Naive thymus-derived CD4-positive, alpha-beta T cell (primary cell): ENCODE measurements at regions of chr5 and their contacts with region 1.

Region 1: DNA sequence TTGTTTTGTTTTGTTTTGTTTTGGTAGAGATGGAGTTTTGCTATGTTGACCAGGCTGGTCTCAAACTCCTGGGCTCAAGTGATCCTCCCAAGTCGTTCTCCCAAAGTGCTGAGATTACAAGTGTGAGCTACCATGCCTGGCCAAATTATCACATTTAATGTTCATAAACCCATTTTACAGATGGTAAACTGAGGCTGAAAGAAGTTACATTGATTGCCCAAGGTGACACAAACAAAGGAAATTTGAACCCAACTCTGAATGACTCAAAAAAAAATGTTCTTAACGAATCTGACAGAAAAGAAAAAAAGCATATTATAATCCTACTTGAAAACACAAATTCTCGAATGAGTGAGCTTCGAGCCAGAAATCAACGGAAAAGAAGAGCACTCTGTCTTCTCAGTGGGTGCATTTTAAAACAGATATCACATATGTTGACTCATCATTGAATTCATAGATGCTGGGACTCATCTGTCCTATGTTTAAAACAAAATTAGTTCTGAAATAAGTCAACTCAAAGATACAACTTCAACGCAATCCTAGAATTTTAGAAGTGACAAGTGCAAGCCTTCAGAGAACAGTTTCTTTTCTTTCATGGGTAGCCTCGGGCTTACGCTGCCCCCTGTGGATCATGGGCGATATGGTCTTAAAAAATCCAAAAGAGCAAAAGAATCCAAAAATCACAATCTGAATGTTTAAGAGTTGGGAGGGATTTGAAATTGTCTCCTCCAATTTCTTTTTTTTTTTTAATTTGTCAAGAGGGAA is 28.4 kb downstream of the TIMD4 start:
- DNase-seq: peak in 8 of 9 donors; percentile 37 to 68 (median 62)
- ATAC-seq: peak; percentile 81
- H3K4me3 ChIP-seq: peak overlapping the region; percentile 25
- H3K4me3 Mint-ChIP-seq: peak overlapping the region in 7 of 10 donors; percentile 17 to 63 (median 54)
- H3K27ac ChIP-seq: no peak overlapping the region
- H3K27ac Mint-ChIP-seq: peak overlapping the region; percentile 36 to 97 (median 60)
- H3K4me1 ChIP-seq: peaks cover 9 to 16% of the 10 kb centered on the region in 2 donors
- H3K4me1 Mint-ChIP-seq: peaks cover 8 to 80% (median 49%) of the 10 kb centered on the region in 7 donors
- H3K27me3 ChIP-seq: no peaks in the 10 kb centered on the region
- H3K27me3 Mint-ChIP-seq: no peaks in the 10 kb centered on the region

Region 2: GRCh38 chr5:154940772-154941620 is 1993.6 kb before region 1 on chr5 and contains the start of gene MRPL22:
- CTCF ChIA-PET with region 1: no interaction called
- POLR2A ChIA-PET with region 1: no interaction called
- intact Hi-C with region 1: loop called (anchors 10 kb)
- DNase-seq: peak; percentile 85 to 99 (median 94)
- ATAC-seq: peak; percentile 84
- H3K4me3 ChIP-seq: peak within 1 kb of the TSS; percentile 76
- H3K4me3 Mint-ChIP-seq: peak within 1 kb of the TSS; percentile 89 to 100 (median 96)
- H3K27ac ChIP-seq: peak within 1 kb of the TSS; percentile 94
- H3K27ac Mint-ChIP-seq: peak within 1 kb of the TSS; percentile 93 to 98 (median 96)
- H3K4me1 ChIP-seq: peaks cover 22 to 25% of the 10 kb centered on the region in 2 donors
- H3K4me1 Mint-ChIP-seq: peaks cover 23 to 62% (median 47%) of the 10 kb centered on the region in 7 donors
- H3K27me3 ChIP-seq: no peaks in the 10 kb centered on the region
- H3K27me3 Mint-ChIP-seq: no peaks in the 10 kb centered on the region
- total RNA-seq, gene MRPL22: 18.4 to 62.0 (median 24.9) TPM

Region 3: GRCh38 chr5:155943516-155944407 is 990.9 kb before region 1 on chr5:
- CTCF ChIA-PET with region 1: interaction called, 3 read pairs
- POLR2A ChIA-PET with region 1: no interaction called
- intact Hi-C with region 1: loop called (anchors 1 to 2 kb)
- DNase-seq: peak in 8 of 9 donors; percentile 1 to 31 (median 22)
- ATAC-seq: peak; percentile 62
- H3K4me3 ChIP-seq: no peak overlapping the region
- H3K4me3 Mint-ChIP-seq: no peak overlapping the region
- H3K27ac ChIP-seq: no peak overlapping the region
- H3K27ac Mint-ChIP-seq: peak overlapping the region in 1 of 9 donors; percentile 32
- H3K4me1 ChIP-seq: no peaks in the 10 kb centered on the region
- H3K4me1 Mint-ChIP-seq: peaks cover 0 to 6% (median 0%) of the 10 kb centered on the region in 7 donors
- H3K27me3 ChIP-seq: no peaks in the 10 kb centered on the region
- H3K27me3 Mint-ChIP-seq: peaks cover 11 to 25% (median 19%) of the 10 kb centered on the region in 5 donors

Region 4: GRCh38 chr5:156667616-156668015 is 267.0 kb before region 1 on chr5:
- CTCF ChIA-PET with region 1: no interaction called
- POLR2A ChIA-PET with region 1: no interaction called
- intact Hi-C with region 1: loop called in 1 of 2 experiments (anchors 5 kb)
- DNase-seq: no peak
- ATAC-seq: no peak
- H3K4me3 ChIP-seq: no peak overlapping the region
- H3K4me3 Mint-ChIP-seq: no peak overlapping the region
- H3K27ac ChIP-seq: no peak overlapping the region
- H3K27ac Mint-ChIP-seq: no peak overlapping the region
- H3K4me1 ChIP-seq: no peaks in the 10 kb centered on the region
- H3K4me1 Mint-ChIP-seq: no peaks in the 10 kb centered on the region
- H3K27me3 ChIP-seq: no peaks in the 10 kb centered on the region
- H3K27me3 Mint-ChIP-seq: peaks cover 0 to 8% (median 6%) of the 10 kb centered on the region in 5 donors

Region 5: DNA sequence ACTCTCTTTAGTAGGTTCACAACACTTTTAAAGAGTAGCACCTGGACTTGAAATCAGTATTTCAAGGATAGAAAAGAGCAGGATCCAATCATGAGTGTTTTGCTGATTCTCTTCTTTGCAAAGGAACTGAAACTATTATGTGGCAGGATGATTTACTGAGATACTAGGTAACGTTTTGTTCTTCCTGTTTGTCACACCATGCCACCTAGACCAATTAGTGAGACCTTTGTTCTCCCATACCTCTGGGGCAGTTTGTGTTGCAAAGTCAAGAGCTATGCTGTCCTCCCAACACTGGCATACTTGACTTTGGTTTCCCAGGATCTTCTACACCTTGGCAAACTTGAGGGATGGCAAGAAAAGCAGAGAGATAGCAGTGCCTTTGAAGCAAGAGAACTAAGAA is 41.1 kb before region 1 on chr5:
- CTCF ChIA-PET with region 1: interaction called, 13 read pairs
- POLR2A ChIA-PET with region 1: no interaction called
- intact Hi-C with region 1: loop called (anchors 1 kb)
- DNase-seq: no peak
- ATAC-seq: no peak
- H3K4me3 ChIP-seq: no peak overlapping the region
- H3K4me3 Mint-ChIP-seq: peak overlapping the region in 5 of 10 donors; percentile 12 to 58 (median 19)
- H3K27ac ChIP-seq: no peak overlapping the region
- H3K27ac Mint-ChIP-seq: peak overlapping the region in 6 of 9 donors; percentile 2 to 93 (median 58)
- H3K4me1 ChIP-seq: peaks cover 0 to 15% of the 10 kb centered on the region in 2 donors
- H3K4me1 Mint-ChIP-seq: peaks cover 21 to 52% (median 32%) of the 10 kb centered on the region in 7 donors
- H3K27me3 ChIP-seq: no peaks in the 10 kb centered on the region
- H3K27me3 Mint-ChIP-seq: no peaks in the 10 kb centered on the region

Region 6: GRCh38 chr5:156981481-156981880 is 46.9 kb after region 1 on chr5:
- CTCF ChIA-PET with region 1: no interaction called
- POLR2A ChIA-PET with region 1: no interaction called
- intact Hi-C with region 1: no loop called
- DNase-seq: no peak
- ATAC-seq: no peak
- H3K4me3 ChIP-seq: no peak overlapping the region
- H3K4me3 Mint-ChIP-seq: no peak overlapping the region
- H3K27ac ChIP-seq: no peak overlapping the region
- H3K27ac Mint-ChIP-seq: no peak overlapping the region
- H3K4me1 ChIP-seq: no peaks in the 10 kb centered on the region
- H3K4me1 Mint-ChIP-seq: peaks cover 0 to 7% (median 0%) of the 10 kb centered on the region in 7 donors
- H3K27me3 ChIP-seq: no peaks in the 10 kb centered on the region
- H3K27me3 Mint-ChIP-seq: no peaks in the 10 kb centered on the region

Region 7: GRCh38 chr5:157710872-157711271 is 776.2 kb after region 1 on chr5:
- CTCF ChIA-PET with region 1: no interaction called
- POLR2A ChIA-PET with region 1: no interaction called
- intact Hi-C with region 1: loop called in 1 of 2 experiments (anchors 5 kb)
- DNase-seq: no peak
- ATAC-seq: no peak
- H3K4me3 ChIP-seq: no peak overlapping the region
- H3K4me3 Mint-ChIP-seq: no peak overlapping the region
- H3K27ac ChIP-seq: no peak overlapping the region
- H3K27ac Mint-ChIP-seq: no peak overlapping the region
- H3K4me1 ChIP-seq: no peaks in the 10 kb centered on the region
- H3K4me1 Mint-ChIP-seq: peaks cover 0 to 12% (median 0%) of the 10 kb centered on the region in 7 donors
- H3K27me3 ChIP-seq: no peaks in the 10 kb centered on the region
- H3K27me3 Mint-ChIP-seq: peaks cover 2 to 12% (median 4%) of the 10 kb centered on the region in 5 donors

Region 8: DNA sequence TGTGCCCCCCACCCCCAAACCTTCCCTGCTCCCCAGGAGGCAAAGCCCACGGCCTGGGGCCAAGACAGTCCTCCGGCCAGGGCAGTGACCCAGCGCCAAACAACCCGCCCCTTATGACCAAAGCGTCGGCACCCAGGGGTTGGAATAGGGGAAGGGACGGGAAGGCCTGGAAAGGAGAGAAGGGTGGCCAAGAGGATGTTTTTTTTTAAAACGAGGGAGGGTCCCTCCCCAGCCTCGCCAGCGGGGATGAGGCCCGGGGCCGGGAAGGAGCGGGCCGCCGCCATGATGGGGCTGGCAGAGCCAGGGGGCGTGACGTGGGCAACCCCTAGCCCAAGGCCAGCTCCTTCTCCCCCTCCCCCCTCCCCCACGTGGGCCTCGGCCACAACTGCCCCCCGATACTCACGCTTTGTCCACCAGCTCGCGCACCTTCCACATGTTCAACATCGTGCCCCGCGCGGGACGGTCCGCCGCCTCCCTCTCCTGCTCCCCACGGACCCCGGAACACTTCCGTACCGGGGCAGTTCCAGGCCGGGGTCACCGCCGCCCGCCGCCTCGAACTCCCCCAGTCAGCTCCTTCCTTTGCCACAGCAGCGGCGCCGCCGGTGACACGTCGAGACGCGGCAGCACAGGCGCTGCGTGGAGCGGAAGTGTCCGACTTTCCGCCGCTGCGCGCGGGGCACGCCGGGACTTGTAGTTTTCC is 924.0 kb after region 1 on chr5 and contains the start of gene CLINT1:
- CTCF ChIA-PET with region 1: no interaction called
- POLR2A ChIA-PET with region 1: no interaction called
- intact Hi-C with region 1: no loop called
- DNase-seq: peak; percentile 78 to 86 (median 84)
- ATAC-seq: peak; percentile 96
- H3K4me3 ChIP-seq: peak within 1 kb of the TSS; percentile 96
- H3K4me3 Mint-ChIP-seq: peak within 1 kb of the TSS; percentile 88 to 99 (median 96)
- H3K27ac ChIP-seq: peak within 1 kb of the TSS; percentile 85
- H3K27ac Mint-ChIP-seq: peak within 1 kb of the TSS; percentile 94 to 99 (median 96)
- H3K4me1 ChIP-seq: peaks cover 7 to 13% of the 10 kb centered on the region in 2 donors
- H3K4me1 Mint-ChIP-seq: peaks cover 51 to 83% (median 78%) of the 10 kb centered on the region in 7 donors
- H3K27me3 ChIP-seq: no peaks in the 10 kb centered on the region
- H3K27me3 Mint-ChIP-seq: no peaks in the 10 kb centered on the region
- total RNA-seq, gene CLINT1: 58.8 to 94.2 (median 74.0) TPM